Activated CD8-positive, alpha-beta T cell treated with anti-CD3 and anti-CD28 coated beads for 36 hours (primary cell): ENCODE measurements at regions of chr2 and their contacts with region 1.

Region 1: GRCh38 chr2:44044281-44044720 is 48.5 kb upstream of the LRPPRC start:
- DNase-seq: peak; percentile 91
- ATAC-seq: peak; percentile 100
- H3K4me3 Mint-ChIP-seq: no peak overlapping the region
- H3K27ac Mint-ChIP-seq: no peak overlapping the region
- H3K4me1 Mint-ChIP-seq: no peaks in the 10 kb centered on the region
- H3K27me3 Mint-ChIP-seq: peaks cover 2% of the 10 kb centered on the region
- CTCF ChIP-seq: peak; percentile 84

Region 2: GRCh38 chr2:44061876-44062275 is 17.6 kb after region 1 on chr2:
- CTCF ChIA-PET with region 1: interaction called, 15 read pairs
- POLR2A ChIA-PET with region 1: no interaction called
- intact Hi-C with region 1: no loop called
- DNase-seq: no peak
- ATAC-seq: no peak
- H3K4me3 Mint-ChIP-seq: no peak overlapping the region
- H3K27ac Mint-ChIP-seq: no peak overlapping the region
- H3K4me1 Mint-ChIP-seq: no peaks in the 10 kb centered on the region
- H3K27me3 Mint-ChIP-seq: no peaks in the 10 kb centered on the region
- CTCF ChIP-seq: no peak

Region 3: DNA sequence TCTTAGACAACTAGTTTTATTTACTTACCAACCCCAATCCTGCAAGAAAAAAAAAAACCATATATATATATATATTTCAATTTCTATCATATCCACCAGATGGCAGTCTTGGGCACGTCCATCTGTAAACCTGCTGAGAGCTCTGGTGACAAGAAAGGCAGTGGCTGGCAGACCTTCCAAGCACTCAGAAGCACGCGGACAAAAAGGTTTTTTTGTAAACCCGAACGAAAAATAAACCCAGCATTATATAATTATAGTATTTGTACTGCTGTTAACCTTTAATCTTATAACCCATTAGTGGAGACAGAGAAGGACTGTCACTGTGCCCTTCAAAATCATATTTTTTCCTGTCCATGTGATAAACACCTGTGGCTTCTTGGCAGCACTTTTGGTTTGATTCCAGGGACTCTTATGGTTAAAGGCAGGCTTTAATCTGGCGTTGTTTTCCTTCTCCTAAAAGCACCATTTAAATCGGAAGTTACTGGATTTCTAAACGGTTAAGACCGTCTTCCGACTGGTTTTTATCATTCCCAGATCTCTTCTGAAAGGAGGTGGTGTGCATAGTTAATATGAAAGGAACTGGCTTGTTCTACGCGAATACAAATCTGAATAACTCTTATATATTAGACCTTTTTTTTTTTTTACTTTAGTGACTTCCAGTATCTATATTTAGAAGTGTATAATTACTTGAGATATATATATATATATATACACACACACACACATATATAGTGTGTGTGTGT is 200.0 kb after region 1 on chr2:
- CTCF ChIA-PET with region 1: interaction called, 13 read pairs
- POLR2A ChIA-PET with region 1: interaction called, 3 read pairs
- intact Hi-C with region 1: no loop called
- DNase-seq: peak; percentile 67
- ATAC-seq: peak; percentile 92
- H3K4me3 Mint-ChIP-seq: peak overlapping the region; percentile 73
- H3K27ac Mint-ChIP-seq: peak overlapping the region; percentile 71
- H3K4me1 Mint-ChIP-seq: peaks cover 16% of the 10 kb centered on the region
- H3K27me3 Mint-ChIP-seq: no peaks in the 10 kb centered on the region
- CTCF ChIP-seq: peak; percentile 70